ENCODE measurements at regions of chr3 and their contacts with region 1.

Region 1: GRCh38 chr3:25664810-25665314 is at the start of gene TOP2B:
- DNase-seq: peak; percentile 98
- total RNA-seq, gene TOP2B: 108 TPM

Region 2: DNA sequence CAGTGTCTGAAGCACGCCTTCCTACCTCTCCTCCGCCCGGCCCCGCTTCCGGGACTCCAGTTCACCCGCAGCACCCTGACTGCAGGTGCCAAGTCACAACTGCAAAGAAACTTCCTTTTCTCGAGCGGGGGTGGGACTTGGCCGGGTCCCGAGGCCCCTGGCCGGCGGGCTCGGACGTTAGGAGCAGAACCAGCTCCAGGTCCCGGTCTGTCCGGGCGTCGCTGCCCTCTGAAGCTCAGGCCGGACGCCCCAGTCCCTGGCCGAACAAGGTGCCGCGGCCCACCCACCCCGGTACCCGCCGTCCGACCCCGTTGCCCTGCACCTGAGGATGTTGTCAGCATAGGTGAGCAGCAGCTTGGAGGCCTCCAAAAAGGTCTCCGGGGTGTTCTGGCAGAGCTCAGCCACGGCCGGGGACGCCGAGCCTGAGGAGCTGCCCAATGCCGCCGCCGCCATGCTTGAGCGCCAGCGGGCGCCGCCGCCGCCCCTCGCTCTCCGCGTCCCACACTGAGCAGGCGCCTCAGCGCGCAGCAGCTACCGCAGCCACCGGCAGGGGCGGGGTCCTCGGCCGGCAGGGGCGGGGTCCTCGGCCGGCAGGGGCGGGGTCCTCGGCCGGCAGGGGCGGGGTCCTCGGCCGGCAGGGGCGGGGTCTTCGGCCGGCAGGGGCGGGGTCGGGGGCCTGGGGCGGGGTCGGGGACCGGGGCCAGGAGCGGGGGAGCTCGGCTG is 118.2 kb after region 1 on chr3 and contains the start of gene NGLY1:
- intact Hi-C with region 1: loop called (anchors 1 kb)
- DNase-seq: peak; percentile 95
- total RNA-seq, gene NGLY1: 29.3 TPM

Measured in cardiac septum (tissue), 1 donor.